Activated B cell treated with CpG ODN at 0.5 μM for 24 hours (primary cell): ENCODE measurements at regions of chr11 and their contacts with region 1.

Region 1: DNA sequence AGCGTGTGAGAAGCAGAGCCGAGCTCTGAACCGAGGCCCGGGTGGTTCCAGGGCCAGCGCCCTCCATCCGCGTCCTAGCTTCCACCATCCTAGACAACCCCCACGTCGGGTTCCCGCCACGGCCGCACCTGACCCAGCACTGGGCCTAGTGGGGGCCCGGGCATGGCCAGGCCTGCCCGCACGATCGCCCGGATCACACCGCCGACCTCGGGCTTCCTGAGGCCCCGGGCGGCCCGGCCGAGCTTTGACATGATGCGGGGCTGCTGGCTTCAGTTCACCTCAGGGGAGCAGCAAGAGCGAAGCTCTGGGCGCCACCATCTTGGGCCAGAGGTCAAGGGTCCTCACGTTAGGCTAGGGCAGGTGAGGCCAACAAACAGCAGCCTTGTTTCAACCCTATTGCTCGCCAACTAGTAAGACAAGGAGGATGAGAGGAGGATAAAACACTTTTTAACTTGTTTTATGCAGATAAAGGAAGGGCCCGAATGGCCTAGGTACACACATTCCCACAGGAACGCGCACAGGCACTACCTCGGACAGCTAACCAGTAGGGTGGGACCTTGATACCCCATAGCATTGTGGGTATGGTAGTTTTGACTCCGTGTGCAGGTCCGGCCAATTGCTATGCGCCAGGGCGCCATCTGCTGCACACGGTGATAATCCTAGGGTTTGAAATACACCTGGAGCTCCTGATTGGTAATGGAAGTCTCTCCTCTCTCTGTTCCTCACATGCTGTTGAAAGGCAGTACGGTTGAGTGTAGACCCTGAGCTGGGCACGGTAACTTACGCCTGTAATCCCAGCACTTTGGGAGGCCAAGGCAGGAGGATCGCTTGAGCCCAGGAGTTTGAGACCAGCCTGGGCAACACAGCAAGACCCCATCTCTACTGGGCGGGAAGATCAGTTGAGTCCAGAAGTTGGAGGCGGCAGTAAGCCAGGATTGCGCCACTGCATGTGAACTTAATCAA is at the start of gene MRPL11:
- DNase-seq: peak; percentile 78
- ATAC-seq: peak; percentile 98
- H3K4me3 Mint-ChIP-seq: peak within 1 kb of the TSS; percentile 87
- H3K27ac Mint-ChIP-seq: peak within 1 kb of the TSS; percentile 97
- H3K4me1 Mint-ChIP-seq: peaks cover 8% of the 10 kb centered on the region
- H3K27me3 Mint-ChIP-seq: peaks cover 4% of the 10 kb centered on the region
- CTCF ChIP-seq: no peak
- total RNA-seq, gene MRPL11: 62.6 and 74.3 TPM in 2 replicates

Region 2: GRCh38 chr11:66268283-66268951 is 170.4 kb before region 1 on chr11 and contains the start of gene RAB1B:
- CTCF ChIA-PET with region 1: no interaction called
- POLR2A ChIA-PET with region 1: no interaction called
- intact Hi-C with region 1: loop called (anchors 1 kb)
- DNase-seq: peak; percentile 98
- ATAC-seq: peak; percentile 76
- H3K4me3 Mint-ChIP-seq: peak within 1 kb of the TSS; percentile 90
- H3K27ac Mint-ChIP-seq: peak within 1 kb of the TSS; percentile 97
- H3K4me1 Mint-ChIP-seq: peaks cover 32% of the 10 kb centered on the region
- H3K27me3 Mint-ChIP-seq: no peaks in the 10 kb centered on the region
- CTCF ChIP-seq: no peak
- total RNA-seq, gene RAB1B: 115 and 118 TPM in 2 replicates

Region 3: DNA sequence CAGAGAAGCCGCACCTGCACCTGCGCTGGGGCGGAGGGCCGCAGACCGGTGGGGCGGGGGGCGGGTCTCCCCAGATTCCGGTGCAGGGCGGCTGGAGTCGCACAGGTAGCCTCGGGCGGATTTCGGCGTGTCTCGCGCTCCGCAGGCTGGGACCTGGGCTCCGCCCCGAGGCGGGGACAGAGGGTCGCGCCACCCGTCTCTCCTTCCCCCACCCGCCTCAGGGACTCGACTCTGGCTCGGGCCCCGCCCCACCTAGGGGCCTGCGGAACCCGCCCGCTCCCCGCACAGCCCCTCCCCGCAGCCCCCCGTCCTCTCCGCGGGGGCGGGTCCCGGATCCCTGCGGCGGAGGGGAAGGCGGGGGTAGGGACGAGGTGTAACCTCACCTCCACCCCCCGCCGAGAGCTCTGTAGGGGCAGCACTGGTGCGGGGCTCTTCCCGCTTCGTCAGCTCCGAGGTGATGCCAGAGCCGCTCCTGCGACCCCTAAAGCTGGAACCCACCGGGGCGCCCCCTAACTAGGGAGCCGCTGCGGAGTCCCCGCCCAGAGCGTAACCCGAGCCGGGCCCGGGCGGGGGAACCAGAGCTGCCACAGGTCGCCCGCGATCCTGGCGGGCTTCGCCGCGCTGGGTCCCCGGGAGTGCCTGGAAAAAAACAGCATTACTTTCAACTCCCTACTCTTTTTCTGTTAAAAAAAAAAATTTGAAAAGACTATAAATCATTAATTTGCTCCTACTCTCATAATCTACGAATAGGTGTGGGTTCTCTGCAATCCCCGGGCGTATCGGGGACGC is 67.0 kb before region 1 on chr11 and contains the start of gene SLC29A2:
- CTCF ChIA-PET with region 1: interaction called, 4 read pairs
- POLR2A ChIA-PET with region 1: interaction called, 6 read pairs
- intact Hi-C with region 1: loop called (anchors 1 kb)
- DNase-seq: peak; percentile 78
- ATAC-seq: peak; percentile 87
- H3K4me3 Mint-ChIP-seq: peak within 1 kb of the TSS; percentile 90
- H3K27ac Mint-ChIP-seq: peak within 1 kb of the TSS; percentile 94
- H3K4me1 Mint-ChIP-seq: peaks cover 15% of the 10 kb centered on the region
- H3K27me3 Mint-ChIP-seq: no peaks in the 10 kb centered on the region
- CTCF ChIP-seq: no peak
- total RNA-seq, gene SLC29A2: 13.5 and 17.1 TPM in 2 replicates

Region 4: GRCh38 chr11:66421492-66422205 is 17.1 kb before region 1 on chr11:
- CTCF ChIA-PET with region 1: interaction called, 7 read pairs
- POLR2A ChIA-PET with region 1: interaction called, 14 read pairs
- intact Hi-C with region 1: loop called (anchors 1 kb)
- DNase-seq: peak; percentile 83
- ATAC-seq: peak; percentile 92
- H3K4me3 Mint-ChIP-seq: no peak overlapping the region
- H3K27ac Mint-ChIP-seq: no peak overlapping the region
- H3K4me1 Mint-ChIP-seq: peaks cover 9% of the 10 kb centered on the region
- H3K27me3 Mint-ChIP-seq: peaks cover 29% of the 10 kb centered on the region
- CTCF ChIP-seq: no peak

Region 5: GRCh38 chr11:66459138-66459778 is 20.5 kb after region 1 on chr11:
- CTCF ChIA-PET with region 1: interaction called, 8 read pairs
- POLR2A ChIA-PET with region 1: interaction called, 10 read pairs
- intact Hi-C with region 1: no loop called
- DNase-seq: no peak
- ATAC-seq: peak; percentile 64
- H3K4me3 Mint-ChIP-seq: peak overlapping the region; percentile 55
- H3K27ac Mint-ChIP-seq: peak overlapping the region; percentile 79
- H3K4me1 Mint-ChIP-seq: peaks cover 48% of the 10 kb centered on the region
- H3K27me3 Mint-ChIP-seq: peaks cover 2% of the 10 kb centered on the region
- CTCF ChIP-seq: no peak

Region 6: DNA sequence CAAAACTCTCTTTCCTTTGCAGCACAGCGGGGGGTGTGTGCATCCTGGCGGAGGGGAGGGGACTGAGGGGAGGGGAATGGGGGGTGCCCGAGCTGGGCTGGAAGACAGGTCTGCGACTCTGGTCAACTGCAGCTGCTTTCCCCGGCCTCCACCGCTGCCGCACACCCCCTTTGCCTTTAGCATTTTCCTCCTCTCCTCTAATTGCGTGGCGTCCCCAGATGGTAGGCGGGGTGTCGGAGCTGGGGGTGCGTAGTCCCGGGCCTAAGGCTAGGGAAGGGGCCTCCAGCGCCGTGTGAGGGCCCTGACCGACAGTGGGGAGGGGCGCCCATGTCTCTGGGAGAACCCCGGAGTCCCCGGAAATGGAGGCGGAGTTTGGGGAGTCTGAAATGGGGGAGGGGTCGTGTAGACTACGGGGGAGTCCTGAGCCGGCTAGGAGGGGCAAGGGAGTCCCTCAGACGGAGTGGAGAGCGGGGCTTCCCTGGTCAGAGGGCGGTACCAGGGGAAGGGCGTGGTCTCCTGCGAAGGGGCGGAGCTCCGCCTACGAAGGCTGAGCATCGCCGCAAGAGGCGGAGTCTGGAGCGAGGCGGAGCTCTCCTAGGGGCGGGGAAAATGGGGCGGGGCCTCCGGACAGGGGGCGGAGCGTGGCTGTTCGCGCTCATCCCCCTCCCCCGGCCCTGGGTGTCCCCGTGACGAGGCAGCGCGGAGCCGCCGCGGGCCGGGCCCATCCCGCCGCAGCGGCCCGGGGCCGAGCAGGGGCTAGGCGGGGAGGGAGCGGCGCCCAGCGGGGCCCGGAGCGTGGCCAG is 27.6 kb after region 1 on chr11 and contains the start of gene PELI3:
- CTCF ChIA-PET with region 1: interaction called, 12 read pairs
- POLR2A ChIA-PET with region 1: interaction called, 40 read pairs
- intact Hi-C with region 1: loop called (anchors 1 kb)
- DNase-seq: peak; percentile 92
- ATAC-seq: peak; percentile 92
- H3K4me3 Mint-ChIP-seq: peak within 1 kb of the TSS; percentile 88
- H3K27ac Mint-ChIP-seq: peak within 1 kb of the TSS; percentile 84
- H3K4me1 Mint-ChIP-seq: peaks cover 43% of the 10 kb centered on the region
- H3K27me3 Mint-ChIP-seq: no peaks in the 10 kb centered on the region
- CTCF ChIP-seq: no peak
- total RNA-seq, gene PELI3: 8.5 and 9.1 TPM in 2 replicates

Region 7: DNA sequence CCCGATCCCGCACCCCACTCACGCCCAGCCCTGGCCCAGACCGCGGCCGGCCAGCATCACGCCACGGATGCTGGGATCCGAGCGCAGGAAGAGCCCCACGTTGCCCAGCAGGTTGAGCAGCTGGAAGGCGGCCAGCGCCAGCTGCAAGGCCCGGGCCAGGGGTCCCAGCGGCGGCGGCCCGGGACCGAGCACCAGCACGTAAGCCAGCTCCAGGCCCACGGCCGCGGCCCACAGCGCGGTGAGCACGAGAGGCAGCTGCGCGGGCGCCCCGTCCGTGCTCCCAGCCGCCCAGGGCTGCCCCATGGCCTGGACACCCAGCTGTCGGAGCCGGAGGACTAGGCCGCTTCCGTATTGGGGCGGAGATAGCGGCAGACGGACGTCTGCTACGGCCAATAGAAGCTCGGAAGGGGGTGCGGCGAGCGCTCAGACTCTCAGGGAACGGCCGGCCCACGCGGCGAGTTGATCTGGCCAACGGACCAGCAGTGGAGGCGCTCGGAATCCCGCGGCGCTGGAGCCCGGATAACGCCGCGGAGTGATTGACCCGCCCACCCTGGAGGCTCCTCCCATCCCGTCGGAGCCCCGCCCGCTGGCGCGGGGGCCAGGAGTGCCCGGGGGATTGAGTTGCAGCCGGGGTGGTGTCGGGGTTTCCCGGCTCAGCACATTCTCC is 107.0 kb after region 1 on chr11 and contains the start of gene ZDHHC24:
- CTCF ChIA-PET with region 1: no interaction called
- POLR2A ChIA-PET with region 1: interaction called, 9 read pairs
- intact Hi-C with region 1: loop called (anchors 1 kb)
- DNase-seq: peak; percentile 86
- ATAC-seq: peak; percentile 85
- H3K4me3 Mint-ChIP-seq: peak within 1 kb of the TSS; percentile 77
- H3K27ac Mint-ChIP-seq: peak within 1 kb of the TSS; percentile 57
- H3K4me1 Mint-ChIP-seq: peaks cover 35% of the 10 kb centered on the region
- H3K27me3 Mint-ChIP-seq: no peaks in the 10 kb centered on the region
- CTCF ChIP-seq: no peak
- total RNA-seq, gene ZDHHC24: 14.6 and 19.0 TPM in 2 replicates